Stomach (tissue), 19 donors: ENCODE measurements at regions of chr13 and their contacts with region 1.

Region 1: GRCh38 chr13:24020375-24020830 is 123.1 kb upstream of the C1QTNF9B start:
- DNase-seq: peak; percentile 69 to 82
- H3K4me3 ChIP-seq: no peak overlapping the region
- H3K27ac ChIP-seq: no peak overlapping the region
- H3K4me1 ChIP-seq: peaks cover 0 to 8% (median 0%) of the 10 kb centered on the region in 4 donors
- H3K27me3 ChIP-seq: no peaks in the 10 kb centered on the region
- CTCF ChIP-seq: peak in 5 of 7 experiments; percentile 58 to 72 (median 68)
- EP300 ChIP-seq: no peak
- POLR2A ChIP-seq: no peak

Region 2: DNA sequence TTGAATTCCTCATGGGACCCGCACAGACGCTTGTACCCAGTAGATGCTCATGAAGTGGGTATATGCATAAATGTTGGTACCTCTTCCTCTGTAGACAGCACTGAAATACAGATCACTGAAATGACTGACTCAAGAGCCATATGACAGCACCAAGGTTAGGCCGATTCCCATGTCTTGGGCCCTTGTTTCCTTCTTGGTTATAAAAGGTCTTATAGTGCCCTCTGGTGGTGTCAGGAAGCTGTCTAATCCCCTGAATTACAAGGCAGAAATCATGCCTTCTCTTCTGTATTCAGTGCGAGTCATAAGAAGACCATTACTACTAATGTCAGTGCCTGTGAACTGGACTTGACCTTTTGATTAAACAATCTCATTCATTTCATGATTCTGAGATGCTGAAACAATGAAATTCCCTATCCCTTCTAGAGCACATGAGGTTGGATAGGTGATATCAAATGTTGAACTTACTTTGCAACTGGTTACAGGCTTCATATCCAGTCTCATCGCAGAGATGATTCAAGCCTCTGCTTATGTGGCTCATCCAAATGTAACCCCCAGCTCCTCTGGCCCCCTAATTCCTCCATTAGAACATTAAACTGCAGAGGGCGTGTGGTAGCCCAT is 199.8 kb after region 1 on chr13:
- intact Hi-C with region 1: loop called (anchors 5 kb)
- DNase-seq: peak; percentile 61 to 91
- H3K4me3 ChIP-seq: no peak overlapping the region
- H3K27ac ChIP-seq: peak overlapping the region in 4 of 5 donors; percentile 41 to 64 (median 62)
- H3K4me1 ChIP-seq: peaks cover 35 to 81% (median 57%) of the 10 kb centered on the region in 4 donors
- H3K27me3 ChIP-seq: no peaks in the 10 kb centered on the region
- CTCF ChIP-seq: peak in 5 of 7 experiments; percentile 64 to 91 (median 81)
- EP300 ChIP-seq: no peak
- POLR2A ChIP-seq: no peak